GM23248 (cell line): ENCODE measurements at regions of chr9 and their contacts with region 1.

Region 1: GRCh38 chr9:132240753-132241493 is 79.1 kb downstream of the NTNG2 start:
- DNase-seq: peak; percentile 80
- H3K4me3 ChIP-seq: peak overlapping the region; percentile 66
- H3K27ac ChIP-seq: no peak overlapping the region
- H3K4me1 ChIP-seq: no peaks in the 10 kb centered on the region
- H3K27me3 ChIP-seq: peaks cover 30% of the 10 kb centered on the region

Region 2: DNA sequence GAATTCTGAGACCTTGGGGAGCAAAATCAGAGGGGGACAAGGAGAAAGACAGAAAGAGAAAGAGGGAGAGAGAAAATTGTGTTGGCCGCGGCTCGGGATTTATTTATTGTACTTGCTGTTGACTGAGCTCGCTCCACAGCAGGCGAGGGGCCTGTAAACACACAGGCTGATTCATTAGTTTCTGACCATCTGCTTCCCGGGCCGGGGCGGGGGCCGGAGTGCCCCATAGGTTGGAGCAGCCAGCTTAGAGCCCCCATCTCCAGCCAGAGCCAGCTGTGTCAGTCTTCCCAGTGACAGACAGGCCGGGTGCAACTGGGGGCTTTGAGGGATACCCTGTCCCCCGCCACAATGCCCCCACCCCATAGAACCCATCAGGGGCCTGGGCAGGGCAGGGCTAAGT is 48.2 kb before region 1 on chr9:
- in situ Hi-C with region 1: no loop called
- DNase-seq: no peak
- H3K4me3 ChIP-seq: no peak overlapping the region
- H3K27ac ChIP-seq: no peak overlapping the region
- H3K4me1 ChIP-seq: no peaks in the 10 kb centered on the region
- H3K27me3 ChIP-seq: peaks cover 7% of the 10 kb centered on the region

Region 3: DNA sequence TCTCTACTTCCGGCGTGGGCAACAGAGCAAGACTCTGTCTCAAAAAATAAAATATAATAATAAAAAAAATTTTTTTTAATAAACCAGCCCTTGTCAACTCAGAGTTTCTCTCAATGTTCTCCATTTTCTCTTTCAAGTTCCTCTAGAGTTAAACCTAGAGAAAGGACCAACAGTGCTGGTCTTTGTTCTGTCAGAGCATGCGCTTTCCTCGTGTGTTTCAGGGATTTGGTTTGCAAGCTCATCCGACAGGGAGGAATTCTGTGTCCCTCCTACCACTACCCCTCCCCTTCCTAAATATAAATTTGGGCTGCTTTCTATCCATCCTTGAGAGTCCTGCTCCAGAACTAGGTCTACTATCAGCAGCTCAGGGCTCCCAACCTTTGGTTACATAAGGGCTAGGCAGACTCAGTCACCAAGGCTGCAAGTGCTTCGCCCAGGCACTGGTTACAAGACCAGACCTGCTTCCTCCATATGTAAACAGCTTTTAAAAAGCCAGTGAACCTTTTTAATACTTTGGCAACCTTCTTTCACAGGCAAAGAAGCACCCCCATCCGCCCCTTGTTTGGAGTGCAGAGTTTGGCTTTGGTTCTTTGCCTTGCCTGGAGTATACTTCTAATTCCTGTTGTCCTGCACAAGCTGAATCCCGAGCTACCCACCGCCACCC is 100.4 kb after region 1 on chr9:
- in situ Hi-C with region 1: loop called (anchors 25 kb)
- DNase-seq: no peak
- H3K4me3 ChIP-seq: no peak overlapping the region
- H3K27ac ChIP-seq: no peak overlapping the region
- H3K4me1 ChIP-seq: no peaks in the 10 kb centered on the region
- H3K27me3 ChIP-seq: no peaks in the 10 kb centered on the region